ENCODE measurements at regions of chr6 and their contacts with region 1.

Region 1: GRCh38 chr6:155188707-155189496 is 74.9 kb upstream of the CLDN20 start:
- DNase-seq: no peak
- ATAC-seq: peak; percentile 16
- H3K4me3 Mint-ChIP-seq: no peak overlapping the region
- H3K27ac Mint-ChIP-seq: peak overlapping the region; percentile 55
- H3K4me1 Mint-ChIP-seq: peaks cover 48% of the 10 kb centered on the region
- H3K27me3 Mint-ChIP-seq: no peaks in the 10 kb centered on the region

Region 2: GRCh38 chr6:155223646-155224451 is 34.9 kb after region 1 on chr6:
- CTCF ChIA-PET with region 1: interaction called, 7 read pairs
- POLR2A ChIA-PET with region 1: no interaction called
- intact Hi-C with region 1: loop called (anchors 1 kb)
- DNase-seq: peak; percentile 79
- ATAC-seq: peak; percentile 99
- H3K4me3 Mint-ChIP-seq: peak overlapping the region; percentile 10
- H3K27ac Mint-ChIP-seq: peak overlapping the region; percentile 79
- H3K4me1 Mint-ChIP-seq: peaks cover 18% of the 10 kb centered on the region
- H3K27me3 Mint-ChIP-seq: peaks cover 3% of the 10 kb centered on the region

Region 3: GRCh38 chr6:155314092-155314772 is 125.3 kb after region 1 on chr6 and contains the start of gene TFB1M:
- CTCF ChIA-PET with region 1: interaction called, 3 read pairs
- POLR2A ChIA-PET with region 1: no interaction called
- intact Hi-C with region 1: loop called in 1 of 2 experiments (anchors 1 kb)
- DNase-seq: peak; percentile 99
- ATAC-seq: peak; percentile 95
- H3K4me3 Mint-ChIP-seq: peak within 1 kb of the TSS; percentile 90
- H3K27ac Mint-ChIP-seq: peak within 1 kb of the TSS; percentile 98
- H3K4me1 Mint-ChIP-seq: peaks cover 39% of the 10 kb centered on the region
- H3K27me3 Mint-ChIP-seq: no peaks in the 10 kb centered on the region
- total RNA-seq, gene TFB1M: 45.5 to 56.4 TPM

Region 4: GRCh38 chr6:155523821-155524651 is 335.1 kb after region 1 on chr6:
- CTCF ChIA-PET with region 1: no interaction called
- POLR2A ChIA-PET with region 1: no interaction called
- intact Hi-C with region 1: loop called (anchors 5 to 10 kb)
- DNase-seq: peak; percentile 35
- ATAC-seq: peak; percentile 93
- H3K4me3 Mint-ChIP-seq: no peak overlapping the region
- H3K27ac Mint-ChIP-seq: peak overlapping the region; percentile 77
- H3K4me1 Mint-ChIP-seq: peaks cover 18% of the 10 kb centered on the region
- H3K27me3 Mint-ChIP-seq: no peaks in the 10 kb centered on the region

Region 5: GRCh38 chr6:155530219-155530834 is 341.4 kb after region 1 on chr6:
- CTCF ChIA-PET with region 1: no interaction called
- POLR2A ChIA-PET with region 1: no interaction called
- intact Hi-C with region 1: loop called in 1 of 2 experiments (anchors 10 kb)
- DNase-seq: peak; percentile 29
- ATAC-seq: peak; percentile 73
- H3K4me3 Mint-ChIP-seq: no peak overlapping the region
- H3K27ac Mint-ChIP-seq: no peak overlapping the region
- H3K4me1 Mint-ChIP-seq: peaks cover 16% of the 10 kb centered on the region
- H3K27me3 Mint-ChIP-seq: no peaks in the 10 kb centered on the region

Measured in activated CD4-positive, alpha-beta T cell treated with anti-CD3 and anti-CD28 coated beads for 36 hours (primary cell).